ENCODE measurements at regions of chr6 and their contacts with region 1.

Region 1: GRCh38 chr6:138588805-138589434 is 89.6 kb upstream of the NHSL1 start:
- DNase-seq: peak; percentile 80
- ATAC-seq: peak; percentile 41
- H3K4me3 ChIP-seq: no peak overlapping the region
- H3K27ac ChIP-seq: no peak overlapping the region
- H3K4me1 ChIP-seq: peaks cover 61% of the 10 kb centered on the region
- H3K27me3 ChIP-seq: no peaks in the 10 kb centered on the region
- CTCF ChIP-seq: peak; percentile 94
- EP300 ChIP-seq: no peak
- POLR2A ChIP-seq: no peak
- RAD21 ChIP-seq: peak; percentile 86

Region 2: DNA sequence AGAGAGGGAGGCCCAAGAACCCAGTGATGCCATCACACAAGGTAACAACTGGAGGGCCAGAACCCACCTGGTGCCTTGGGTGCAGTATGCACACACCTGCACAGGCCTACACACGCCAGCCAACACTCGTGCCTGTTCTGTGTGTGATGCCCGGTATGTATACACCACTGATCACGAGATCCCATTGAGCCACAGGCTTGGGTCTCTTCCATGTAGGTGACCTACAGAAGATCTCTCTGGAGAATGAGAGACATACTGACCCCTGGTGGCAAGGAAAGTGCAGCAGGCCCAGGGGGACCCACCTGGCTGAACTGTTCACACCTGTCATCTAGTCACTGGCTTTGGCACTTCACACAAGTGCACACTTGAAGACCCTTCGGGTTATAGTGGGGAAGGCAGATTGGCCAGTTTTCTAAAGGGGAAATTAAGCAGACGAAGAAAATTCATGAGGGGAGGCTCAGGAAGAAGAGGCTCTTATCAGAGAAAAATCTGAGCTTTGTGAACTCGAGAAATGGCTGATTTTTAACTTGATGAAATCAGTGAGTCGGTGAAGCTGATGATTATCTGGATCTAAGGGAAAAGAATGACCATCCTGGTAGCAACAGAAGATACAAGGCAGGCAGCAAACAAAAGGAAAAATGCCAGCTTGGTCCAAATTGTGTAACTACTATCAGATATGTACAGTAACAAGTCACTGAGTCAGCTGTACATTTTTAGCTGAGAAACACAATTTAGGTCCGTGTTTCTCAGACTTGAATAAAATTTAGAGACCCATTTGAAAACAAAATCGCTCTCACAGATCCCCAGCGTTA is 301.6 kb before region 1 on chr6:
- CTCF ChIA-PET with region 1: no interaction called
- POLR2A ChIA-PET with region 1: no interaction called
- in situ Hi-C with region 1: loop called (anchors 25 kb)
- intact Hi-C with region 1: loop called (anchors 1 kb)
- DNase-seq: peak; percentile 58
- ATAC-seq: peak; percentile 85
- H3K4me3 ChIP-seq: no peak overlapping the region
- H3K27ac ChIP-seq: no peak overlapping the region
- H3K4me1 ChIP-seq: 0 out of 2 replicates have a peak, but pooled peaks cover 5% of the 10 kb centered on the region
- H3K27me3 ChIP-seq: no peaks in the 10 kb centered on the region
- CTCF ChIP-seq: peak; percentile 95
- EP300 ChIP-seq: no peak
- POLR2A ChIP-seq: no peak
- RAD21 ChIP-seq: peak; percentile 83

Region 3: DNA sequence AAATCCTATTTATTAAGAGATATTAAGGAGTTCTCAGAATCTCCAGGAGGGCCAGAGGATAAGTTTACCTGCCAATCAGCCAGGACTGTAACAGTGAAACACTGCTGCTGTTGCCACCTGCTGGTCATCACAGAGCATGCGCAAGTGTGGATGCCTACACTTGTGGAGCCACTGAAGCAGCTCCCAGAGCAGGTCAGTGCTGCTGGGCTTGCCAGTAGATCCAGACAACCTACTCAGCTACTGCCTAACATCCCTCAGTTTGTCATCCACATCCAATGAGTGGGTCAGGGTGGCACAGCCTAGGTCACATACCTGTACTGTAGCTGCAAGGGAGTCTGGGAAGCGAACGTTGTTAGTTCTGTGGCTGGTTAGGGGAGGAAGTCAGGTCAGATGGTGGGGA is 71.3 kb before region 1 on chr6:
- CTCF ChIA-PET with region 1: interaction called, 7 read pairs
- POLR2A ChIA-PET with region 1: no interaction called
- in situ Hi-C with region 1: no loop called
- intact Hi-C with region 1: loop called (anchors 2 kb)
- DNase-seq: peak; percentile 78
- ATAC-seq: peak; percentile 96
- H3K4me3 ChIP-seq: no peak overlapping the region
- H3K27ac ChIP-seq: no peak overlapping the region
- H3K4me1 ChIP-seq: peaks cover 32% of the 10 kb centered on the region
- H3K27me3 ChIP-seq: no peaks in the 10 kb centered on the region
- CTCF ChIP-seq: peak; percentile 88
- EP300 ChIP-seq: no peak
- POLR2A ChIP-seq: no peak
- RAD21 ChIP-seq: peak; percentile 83

Region 4: DNA sequence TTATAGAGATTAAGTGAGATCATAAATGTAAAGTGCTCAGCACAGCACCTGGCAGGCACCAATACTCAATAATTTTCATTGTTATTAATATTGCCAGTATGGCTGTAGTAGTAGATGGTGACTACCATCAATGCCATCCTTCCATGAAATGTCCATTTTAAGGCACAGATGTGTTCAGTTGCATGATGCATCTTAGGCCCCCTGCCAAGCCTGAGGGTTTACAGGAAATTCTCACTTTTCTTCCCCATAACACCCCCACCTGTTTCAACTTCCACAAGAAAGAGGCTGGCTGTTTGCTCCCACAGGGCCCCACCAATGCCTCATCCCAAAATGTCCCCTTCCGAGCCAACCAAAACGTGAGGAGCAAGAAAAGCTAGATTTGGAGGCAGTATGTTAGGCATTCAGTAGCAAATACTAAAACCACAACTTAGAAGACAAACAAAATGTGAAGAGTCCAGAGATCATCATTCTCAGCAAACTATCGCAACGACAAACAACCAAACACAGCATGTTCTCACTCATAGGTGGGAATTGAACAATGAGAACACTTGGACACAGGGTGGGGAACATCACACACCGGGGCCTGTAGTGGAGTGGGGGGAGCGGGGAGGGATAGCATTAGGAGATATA is 21.0 kb after region 1 on chr6:
- CTCF ChIA-PET with region 1: no interaction called
- POLR2A ChIA-PET with region 1: interaction called, 3 read pairs
- in situ Hi-C with region 1: no loop called
- intact Hi-C with region 1: loop called (anchors 1 kb)
- DNase-seq: peak; percentile 64
- ATAC-seq: peak; percentile 85
- H3K4me3 ChIP-seq: no peak overlapping the region
- H3K27ac ChIP-seq: peak overlapping the region; percentile 15
- H3K4me1 ChIP-seq: peaks cover 25% of the 10 kb centered on the region
- H3K27me3 ChIP-seq: no peaks in the 10 kb centered on the region
- CTCF ChIP-seq: no peak
- EP300 ChIP-seq: no peak
- POLR2A ChIP-seq: no peak
- RAD21 ChIP-seq: no peak

Region 5: DNA sequence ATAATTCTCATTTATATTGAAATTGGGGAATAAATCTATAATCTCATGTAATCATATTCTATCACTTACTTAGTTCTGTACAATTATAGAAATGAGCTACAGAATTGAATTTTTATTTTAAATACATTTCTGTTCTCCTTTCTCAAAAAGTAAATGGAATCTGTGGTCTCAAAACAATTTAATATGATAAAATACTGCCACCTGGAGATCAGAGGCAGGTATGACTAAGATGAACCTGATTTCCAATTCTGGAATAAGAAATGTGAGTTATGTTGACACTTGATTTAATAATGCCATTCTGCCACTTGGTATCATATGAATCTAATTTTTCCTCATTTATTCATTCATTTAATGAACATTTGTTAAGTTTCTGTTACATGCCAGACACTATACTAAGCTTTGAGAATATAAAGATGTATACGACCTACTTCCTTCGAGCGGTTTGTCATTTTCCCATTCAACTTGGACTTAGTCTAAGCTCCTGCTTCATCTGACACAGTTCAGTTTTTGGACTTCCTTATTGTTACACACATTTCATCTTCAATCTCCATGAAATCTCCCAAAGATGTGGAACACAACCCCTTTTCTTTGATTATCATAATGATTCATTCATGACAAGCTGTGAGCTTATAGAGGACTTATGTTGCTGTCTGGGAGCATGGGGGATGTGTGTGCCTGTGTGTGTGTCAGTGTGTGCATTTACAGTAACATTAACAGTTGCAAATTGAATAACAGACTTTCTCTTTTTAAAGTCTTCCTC is 177.2 kb after region 1 on chr6:
- CTCF ChIA-PET with region 1: interaction called, 60 read pairs
- POLR2A ChIA-PET with region 1: no interaction called
- in situ Hi-C with region 1: loop called (anchors 5 kb)
- intact Hi-C with region 1: loop called (anchors 1 kb)
- DNase-seq: peak; percentile 48
- ATAC-seq: no peak
- H3K4me3 ChIP-seq: no peak overlapping the region
- H3K27ac ChIP-seq: no peak overlapping the region
- H3K4me1 ChIP-seq: peaks cover 3% of the 10 kb centered on the region
- H3K27me3 ChIP-seq: no peaks in the 10 kb centered on the region
- CTCF ChIP-seq: peak; percentile 73
- EP300 ChIP-seq: no peak
- POLR2A ChIP-seq: no peak
- RAD21 ChIP-seq: peak; percentile 66; the same call in 1 of the 2 replicates

Measured in HepG2 (cell line).